ENCODE measurements at regions of chr14 and their contacts with region 1.

Region 1: DNA sequence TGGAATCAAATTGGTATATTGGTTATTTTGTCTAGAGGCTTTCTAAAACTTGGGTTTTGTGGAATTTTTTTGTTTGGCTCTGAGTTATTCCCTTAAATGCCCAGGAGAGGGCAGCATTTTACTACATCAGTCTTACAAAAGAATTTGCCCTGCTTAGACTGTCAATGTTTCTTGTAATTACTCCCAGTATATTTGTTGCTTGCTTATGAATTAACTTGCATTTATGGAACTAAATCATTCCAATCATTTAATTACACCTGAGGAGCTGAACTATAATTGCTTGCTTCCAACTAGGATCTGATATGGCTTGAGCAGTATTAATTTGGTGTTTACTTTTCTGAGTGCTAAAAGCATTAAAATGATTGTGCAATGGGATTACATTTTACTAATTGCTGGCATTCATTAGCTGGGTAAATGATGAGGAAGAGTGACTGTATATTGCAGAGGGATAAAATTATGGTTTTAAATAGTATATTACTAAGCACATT is 48.7 kb downstream of the MIPOL1 start:
- DNase-seq: peak; percentile 52
- H3K4me3 ChIP-seq: no peak overlapping the region
- H3K27ac ChIP-seq: no peak overlapping the region
- H3K4me1 ChIP-seq: no peaks in the 10 kb centered on the region
- H3K27me3 ChIP-seq: no peaks in the 10 kb centered on the region
- CTCF ChIP-seq: peak; percentile 27 to 54
- POLR2A ChIP-seq: no peak

Region 2: DNA sequence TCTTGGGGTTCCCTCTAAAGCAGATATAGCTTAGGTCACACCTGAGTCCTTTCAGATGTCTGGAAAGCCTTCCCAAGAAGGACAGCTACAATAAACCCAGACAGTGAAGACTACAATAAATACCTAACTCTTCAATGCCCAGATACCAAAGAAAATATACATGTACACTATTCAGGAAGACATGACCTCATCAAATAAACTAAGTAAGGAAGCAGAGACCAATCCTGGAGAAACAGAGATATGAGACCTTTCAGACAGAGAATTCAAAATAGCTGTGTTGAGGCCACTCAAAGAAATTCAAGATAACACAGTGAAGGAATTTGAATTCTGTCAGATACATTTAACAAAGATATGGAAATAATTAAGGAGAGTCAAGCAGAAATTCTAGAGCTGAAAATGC is 33.5 kb before region 1 on chr14:
- CTCF ChIA-PET with region 1: no interaction called
- POLR2A ChIA-PET with region 1: no interaction called
- dilution Hi-C with region 1: no loop called
- intact Hi-C with region 1: no loop called
- DNase-seq: peak; percentile 87
- H3K4me3 ChIP-seq: no peak overlapping the region
- H3K27ac ChIP-seq: peak overlapping the region; percentile 93
- H3K4me1 ChIP-seq: peaks cover 33% of the 10 kb centered on the region
- H3K27me3 ChIP-seq: no peaks in the 10 kb centered on the region
- CTCF ChIP-seq: no peak
- POLR2A ChIP-seq: peak; percentile 57

Region 3: GRCh38 chr14:37565550-37565949 is 319.1 kb after region 1 on chr14:
- CTCF ChIA-PET with region 1: interaction called, 4 read pairs
- POLR2A ChIA-PET with region 1: no interaction called
- dilution Hi-C with region 1: no loop called
- intact Hi-C with region 1: loop called (anchors 1 kb)
- DNase-seq: no peak
- H3K4me3 ChIP-seq: no peak overlapping the region
- H3K27ac ChIP-seq: no peak overlapping the region
- H3K4me1 ChIP-seq: peaks cover 19% of the 10 kb centered on the region
- H3K27me3 ChIP-seq: no peaks in the 10 kb centered on the region
- CTCF ChIP-seq: no peak
- POLR2A ChIP-seq: no peak

Region 4: DNA sequence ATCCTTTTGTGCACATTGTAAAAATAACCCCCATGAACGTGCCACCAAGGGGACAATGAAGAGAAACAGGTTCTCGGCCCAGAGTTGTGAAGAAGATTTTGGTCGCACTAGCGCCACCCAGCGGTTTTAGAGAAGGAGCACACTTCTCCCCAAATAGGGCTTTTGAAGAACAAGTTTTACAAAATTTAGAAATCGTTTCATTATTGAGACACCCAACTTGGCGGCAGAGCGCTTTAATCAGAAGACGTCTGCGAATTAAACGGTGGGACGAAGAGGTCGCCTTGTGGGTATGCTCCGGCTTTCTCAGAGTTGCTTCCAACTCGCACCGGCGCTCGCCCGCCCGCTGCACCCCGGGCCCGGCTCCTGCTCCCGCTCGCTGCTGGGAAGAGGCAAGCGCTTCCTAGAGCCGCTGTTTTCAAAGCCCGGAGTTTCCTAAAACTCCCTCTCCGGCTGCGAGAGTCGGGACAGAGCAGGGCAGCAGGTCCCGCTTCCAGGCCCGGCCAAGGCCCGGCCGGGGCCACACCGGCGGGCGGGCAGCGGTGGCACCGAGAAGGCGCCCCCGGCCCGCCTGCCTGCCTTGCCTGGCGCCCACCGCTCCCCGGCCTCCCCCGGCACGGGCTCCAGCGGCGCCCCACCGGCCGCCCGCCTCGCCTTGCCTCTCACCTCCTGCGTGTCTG is 347.9 kb after region 1 on chr14:
- CTCF ChIA-PET with region 1: interaction called, 10 read pairs
- POLR2A ChIA-PET with region 1: no interaction called
- dilution Hi-C with region 1: no loop called
- intact Hi-C with region 1: loop called (anchors 1 kb)
- DNase-seq: peak; percentile 80
- H3K4me3 ChIP-seq: peak overlapping the region; percentile 30 to 62 (median 41)
- H3K27ac ChIP-seq: no peak overlapping the region
- H3K4me1 ChIP-seq: peaks cover 4% of the 10 kb centered on the region
- H3K27me3 ChIP-seq: peaks cover 73 to 88% of the 10 kb centered on the region in 2 experiments
- CTCF ChIP-seq: peak; percentile 81 to 89
- POLR2A ChIP-seq: no peak

Region 5: GRCh38 chr14:37709419-37710195 is 463.1 kb after region 1 on chr14:
- CTCF ChIA-PET with region 1: no interaction called
- POLR2A ChIA-PET with region 1: no interaction called
- dilution Hi-C with region 1: no loop called
- intact Hi-C with region 1: loop called (anchors 10 kb)
- DNase-seq: peak; percentile 16
- H3K4me3 ChIP-seq: no peak overlapping the region
- H3K27ac ChIP-seq: no peak overlapping the region
- H3K4me1 ChIP-seq: no peaks in the 10 kb centered on the region
- H3K27me3 ChIP-seq: peaks cover 6 to 11% of the 10 kb centered on the region in 2 experiments
- CTCF ChIP-seq: peak in 1 of 2 donors; percentile 24
- POLR2A ChIP-seq: no peak

Measured in endothelial cell of umbilical vein (primary cell).